Endothelial cell of umbilical vein (primary cell): ENCODE measurements at regions of chr1 and their contacts with region 1.

Region 1: GRCh38 chr1:156689035-156689952 is 12.1 kb upstream of the NES start:
- DNase-seq: peak; percentile 86
- H3K4me3 ChIP-seq: no peak overlapping the region
- H3K27ac ChIP-seq: no peak overlapping the region
- H3K4me1 ChIP-seq: no peaks in the 10 kb centered on the region
- H3K27me3 ChIP-seq: peaks cover 19 to 31% of the 10 kb centered on the region in 2 experiments
- CTCF ChIP-seq: peak; percentile 87 to 93
- POLR2A ChIP-seq: no peak

Region 2: DNA sequence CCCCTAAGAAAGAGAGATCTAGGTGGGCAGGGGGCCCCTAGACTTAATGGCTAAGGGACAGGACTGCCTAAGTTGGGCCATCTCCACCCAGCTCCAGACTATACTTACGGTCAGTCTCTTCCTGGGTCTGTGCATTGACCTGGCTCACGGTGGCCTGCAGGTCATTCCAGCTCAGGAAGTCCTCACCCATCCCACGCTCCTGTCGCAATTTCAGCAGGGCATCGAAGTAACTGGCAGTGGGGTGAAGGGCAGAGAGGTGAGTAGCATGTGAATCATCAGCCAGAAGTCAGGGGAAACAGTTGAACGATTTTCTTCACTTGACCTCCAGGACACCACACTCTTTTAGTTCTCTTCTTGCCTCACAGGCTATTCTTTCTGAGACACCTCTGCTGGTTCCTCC is 137.4 kb before region 1 on chr1:
- CTCF ChIA-PET with region 1: no interaction called
- POLR2A ChIA-PET with region 1: no interaction called
- dilution Hi-C with region 1: no loop called
- intact Hi-C with region 1: no loop called
- DNase-seq: no peak
- H3K4me3 ChIP-seq: no peak overlapping the region
- H3K27ac ChIP-seq: no peak overlapping the region
- H3K4me1 ChIP-seq: no peaks in the 10 kb centered on the region
- H3K27me3 ChIP-seq: no peaks in the 10 kb centered on the region
- CTCF ChIP-seq: no peak
- POLR2A ChIP-seq: no peak

Region 3: GRCh38 chr1:156625436-156626078 is 63.7 kb before region 1 on chr1:
- CTCF ChIA-PET with region 1: interaction called, 29 read pairs
- POLR2A ChIA-PET with region 1: no interaction called
- dilution Hi-C with region 1: no loop called
- intact Hi-C with region 1: no loop called
- DNase-seq: peak; percentile 47
- H3K4me3 ChIP-seq: no peak overlapping the region
- H3K27ac ChIP-seq: no peak overlapping the region
- H3K4me1 ChIP-seq: peaks cover 10% of the 10 kb centered on the region
- H3K27me3 ChIP-seq: peaks cover 36% of the 10 kb centered on the region in 2 experiments
- CTCF ChIP-seq: peak; percentile 69 to 90
- POLR2A ChIP-seq: no peak

Region 4: GRCh38 chr1:156705918-156706656 is 16.8 kb after region 1 on chr1:
- CTCF ChIA-PET with region 1: interaction called, 453 read pairs
- POLR2A ChIA-PET with region 1: interaction called, 3 read pairs
- dilution Hi-C with region 1: no loop called
- intact Hi-C with region 1: loop called (anchors 1 kb)
- DNase-seq: peak; percentile 57
- H3K4me3 ChIP-seq: peak overlapping the region in 1 of 3 experiments; percentile 4
- H3K27ac ChIP-seq: no peak overlapping the region
- H3K4me1 ChIP-seq: peaks cover 19% of the 10 kb centered on the region
- H3K27me3 ChIP-seq: peaks cover 0 to 3% of the 10 kb centered on the region in 2 experiments
- CTCF ChIP-seq: peak; percentile 76 to 87
- POLR2A ChIP-seq: no peak

Region 5: DNA sequence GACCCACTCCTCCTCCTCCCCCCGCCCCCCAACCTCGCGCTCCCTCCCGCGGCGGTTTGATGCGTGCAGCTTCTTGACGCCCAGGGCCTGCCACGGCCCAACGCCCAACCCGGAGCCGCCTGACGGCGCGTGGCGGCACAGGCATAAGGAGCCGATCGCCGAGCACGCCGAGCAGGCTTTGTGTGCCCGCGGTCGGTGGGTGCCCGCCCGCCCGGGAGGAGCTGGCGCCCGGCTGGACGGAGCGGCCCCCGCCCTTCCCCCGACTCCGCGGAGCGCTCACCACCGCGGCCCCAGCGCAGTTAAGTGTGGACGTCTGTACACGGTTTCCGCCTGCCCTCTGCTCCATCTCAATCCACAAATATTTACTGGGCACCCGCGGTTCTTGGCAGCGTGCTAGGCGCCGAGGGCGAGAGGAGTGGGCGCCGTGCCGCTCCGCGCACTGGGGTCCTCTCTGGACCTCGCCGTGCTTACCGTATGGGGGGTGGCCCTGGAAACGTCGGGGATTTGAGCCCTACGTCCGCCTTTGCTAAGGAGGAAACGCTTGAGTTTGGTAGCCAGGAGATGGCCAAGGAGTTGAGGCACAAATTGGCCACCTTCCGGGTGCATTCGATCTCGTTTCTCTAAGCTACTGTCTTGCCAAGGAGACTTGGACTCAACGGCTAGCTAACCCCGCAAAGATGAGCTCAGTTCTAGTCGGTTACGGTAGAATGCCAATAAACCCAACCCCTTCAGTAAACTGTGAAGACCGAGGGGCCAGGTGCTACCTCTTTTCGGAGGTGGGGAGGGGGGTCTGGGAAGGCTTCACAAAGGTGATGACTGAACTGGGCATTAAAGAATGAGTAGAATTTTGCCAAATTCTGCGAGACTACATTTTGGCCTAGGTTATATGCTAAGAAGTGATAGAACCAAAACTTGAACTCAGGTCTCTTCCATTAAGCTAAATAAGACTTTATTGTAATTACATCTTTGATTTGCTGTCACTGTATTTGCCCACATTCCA is 62.8 kb after region 1 on chr1:
- CTCF ChIA-PET with region 1: interaction called, 15 read pairs
- POLR2A ChIA-PET with region 1: no interaction called
- dilution Hi-C with region 1: no loop called
- intact Hi-C with region 1: no loop called
- DNase-seq: peak; percentile 97
- H3K4me3 ChIP-seq: peak overlapping the region; percentile 30 to 94 (median 73)
- H3K27ac ChIP-seq: peak overlapping the region; percentile 60
- H3K4me1 ChIP-seq: peaks cover 42% of the 10 kb centered on the region
- H3K27me3 ChIP-seq: no peaks in the 10 kb centered on the region
- CTCF ChIP-seq: peak in 1 of 2 donors; percentile 29
- POLR2A ChIP-seq: peak; percentile 72

Region 6: DNA sequence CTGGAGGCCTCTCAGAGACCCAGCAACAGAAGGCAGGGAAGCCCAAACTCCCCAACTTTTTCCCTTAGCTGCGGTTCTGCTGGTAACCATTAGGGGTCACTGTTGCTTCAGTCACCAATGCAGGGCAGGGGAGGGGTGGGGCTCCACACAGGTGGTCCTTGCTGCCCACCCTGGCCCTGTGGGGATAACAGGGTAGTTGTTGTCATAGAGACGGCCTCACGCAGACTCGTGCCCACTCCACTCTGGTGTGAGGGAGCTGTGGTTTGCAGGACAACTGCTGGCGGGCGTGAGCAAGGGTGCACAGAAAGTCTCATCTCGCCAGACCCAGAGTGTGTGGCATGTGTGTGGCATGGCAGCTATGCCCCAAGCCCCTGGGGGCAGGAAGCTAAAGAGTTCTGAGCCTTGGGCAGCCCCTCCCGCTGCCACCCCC is 149.7 kb after region 1 on chr1:
- CTCF ChIA-PET with region 1: interaction called, 11 read pairs
- POLR2A ChIA-PET with region 1: no interaction called
- dilution Hi-C with region 1: no loop called
- intact Hi-C with region 1: no loop called
- DNase-seq: peak; percentile 30
- H3K4me3 ChIP-seq: no peak overlapping the region
- H3K27ac ChIP-seq: no peak overlapping the region
- H3K4me1 ChIP-seq: peaks cover 16% of the 10 kb centered on the region
- H3K27me3 ChIP-seq: peaks cover 30 to 41% of the 10 kb centered on the region in 2 experiments
- CTCF ChIP-seq: peak; percentile 82 to 88
- POLR2A ChIP-seq: no peak

Region 7: DNA sequence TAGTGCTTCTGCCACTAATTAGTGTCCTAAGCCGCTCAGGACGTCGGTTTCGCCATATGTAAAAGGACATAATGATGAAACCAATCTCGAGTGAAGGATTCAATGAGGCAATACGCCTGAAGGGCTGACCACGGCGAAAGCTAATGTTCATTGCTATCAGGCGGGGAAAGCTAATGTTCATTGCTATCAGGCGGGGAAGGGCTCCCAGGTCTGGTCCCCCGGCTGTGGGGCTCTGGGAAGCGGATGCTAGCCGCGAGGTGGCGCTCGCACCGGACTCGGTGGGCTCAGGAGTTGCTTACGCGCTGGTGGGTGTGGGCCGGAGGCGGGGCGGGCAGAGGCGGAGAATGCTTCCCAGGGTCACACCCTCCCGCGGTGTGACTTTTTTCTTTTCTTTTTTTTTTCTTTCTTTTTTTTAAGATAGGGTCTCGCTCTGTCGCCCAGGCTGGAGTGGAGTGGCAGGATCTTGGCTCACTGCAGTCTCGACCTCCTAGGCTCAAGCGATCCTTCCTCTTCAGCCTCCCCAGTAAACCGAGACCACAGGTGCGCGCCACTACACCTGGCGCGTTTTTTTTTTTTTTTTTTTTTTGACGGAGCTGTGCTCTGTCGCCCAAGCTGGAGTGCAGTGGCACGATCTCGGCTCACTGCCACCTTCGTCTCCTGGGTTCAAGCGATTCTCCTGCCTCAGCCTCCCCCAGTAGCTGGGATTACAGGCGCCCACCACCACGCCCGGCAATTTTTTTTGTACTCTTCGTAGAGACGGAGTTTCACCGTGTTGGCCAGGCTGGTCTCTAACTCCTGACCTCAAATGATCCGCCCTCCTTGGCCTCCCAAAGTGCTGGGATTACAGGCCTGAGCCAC is 203.1 kb after region 1 on chr1:
- CTCF ChIA-PET with region 1: interaction called, 137 read pairs
- POLR2A ChIA-PET with region 1: no interaction called
- dilution Hi-C with region 1: no loop called
- intact Hi-C with region 1: loop called (anchors 1 kb)
- DNase-seq: peak; percentile 87
- H3K4me3 ChIP-seq: no peak overlapping the region
- H3K27ac ChIP-seq: peak overlapping the region; percentile 64
- H3K4me1 ChIP-seq: peaks cover 31% of the 10 kb centered on the region
- H3K27me3 ChIP-seq: no peaks in the 10 kb centered on the region
- CTCF ChIP-seq: peak; percentile 91 to 97
- POLR2A ChIP-seq: no peak